Activated B cell treated with CpG ODN at 0.5 μM for 24 hours (primary cell): ENCODE measurements at regions of chr13 and their contacts with region 1.

Region 1: GRCh38 chr13:50396001-50396400 is 380.8 kb downstream of the KCNRG start:
- DNase-seq: no peak
- ATAC-seq: no peak
- H3K4me3 Mint-ChIP-seq: no peak overlapping the region
- H3K27ac Mint-ChIP-seq: no peak overlapping the region
- H3K4me1 Mint-ChIP-seq: no peaks in the 10 kb centered on the region
- H3K27me3 Mint-ChIP-seq: no peaks in the 10 kb centered on the region
- CTCF ChIP-seq: no peak

Region 2: DNA sequence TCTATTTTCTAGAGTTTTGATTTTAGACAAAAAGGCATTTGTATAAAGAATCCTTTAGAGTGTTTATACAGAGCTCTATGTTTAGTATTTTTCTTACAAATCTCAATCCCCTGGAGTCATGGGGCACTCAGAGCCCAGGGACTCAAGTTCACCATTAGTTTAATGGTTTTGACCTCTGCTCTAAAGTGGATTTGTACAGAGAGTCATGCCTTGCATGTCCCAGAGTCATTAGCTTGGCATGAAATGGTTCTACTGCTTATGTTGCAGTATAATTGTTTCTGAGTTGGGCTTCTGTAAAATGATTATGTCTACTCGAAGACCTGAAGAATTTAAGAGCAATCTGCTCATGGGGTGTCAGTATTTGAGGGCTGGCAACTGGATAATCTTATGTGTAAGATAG is 41.3 kb after region 1 on chr13:
- CTCF ChIA-PET with region 1: no interaction called
- POLR2A ChIA-PET with region 1: no interaction called
- intact Hi-C with region 1: loop called (anchors 5 kb)
- DNase-seq: no peak
- ATAC-seq: no peak
- H3K4me3 Mint-ChIP-seq: no peak overlapping the region
- H3K27ac Mint-ChIP-seq: no peak overlapping the region
- H3K4me1 Mint-ChIP-seq: no peaks in the 10 kb centered on the region
- H3K27me3 Mint-ChIP-seq: no peaks in the 10 kb centered on the region
- CTCF ChIP-seq: no peak